GM12878 (cell line): ENCODE measurements at regions of chr11 and their contacts with region 1.

Region 1: GRCh38 chr11:1852877-1853276 is at the start of gene LSP1:
- DNase-seq: peak; percentile 92
- ATAC-seq: peak; percentile 57
- H3K4me3 ChIP-seq: peak within 1 kb of the TSS; percentile 96
- H3K27ac ChIP-seq: peak within 1 kb of the TSS; percentile 99
- H3K4me1 ChIP-seq: peaks cover 60% of the 10 kb centered on the region
- H3K27me3 ChIP-seq: no peaks in the 10 kb centered on the region
- CTCF ChIP-seq: no peak
- EP300 ChIP-seq: peak; percentile 97 to 98
- POLR2A ChIP-seq: peak; percentile 89
- RAD21 ChIP-seq: peak; percentile 43; the same call in 1 of the 2 replicates
- polyA plus RNA-seq, gene LSP1: 19.2 to 34.2 TPM

Region 2: GRCh38 chr11:1837171-1838076 is 15.5 kb before region 1 on chr11:
- CTCF ChIA-PET with region 1: interaction called, 5 read pairs
- POLR2A ChIA-PET with region 1: interaction called, 4 read pairs
- RAD21 ChIA-PET with region 1: interaction called, 10 read pairs
- SMC1A ChIA-PET with region 1: interaction called, 6 read pairs
- in situ Hi-C with region 1: no loop called
- intact Hi-C with region 1: no loop called
- DNase-seq: no peak
- ATAC-seq: peak; percentile 89
- H3K4me3 ChIP-seq: no peak overlapping the region; the same call in 1 of the 2 replicates
- H3K27ac ChIP-seq: no peak overlapping the region
- H3K4me1 ChIP-seq: peaks cover 15% of the 10 kb centered on the region
- H3K27me3 ChIP-seq: no peaks in the 10 kb centered on the region; a peak in 1 of 4 replicates
- CTCF ChIP-seq: peak; percentile 91 to 96 (median 94)
- EP300 ChIP-seq: no peak
- POLR2A ChIP-seq: no peak
- RAD21 ChIP-seq: peak; percentile 96

Region 3: DNA sequence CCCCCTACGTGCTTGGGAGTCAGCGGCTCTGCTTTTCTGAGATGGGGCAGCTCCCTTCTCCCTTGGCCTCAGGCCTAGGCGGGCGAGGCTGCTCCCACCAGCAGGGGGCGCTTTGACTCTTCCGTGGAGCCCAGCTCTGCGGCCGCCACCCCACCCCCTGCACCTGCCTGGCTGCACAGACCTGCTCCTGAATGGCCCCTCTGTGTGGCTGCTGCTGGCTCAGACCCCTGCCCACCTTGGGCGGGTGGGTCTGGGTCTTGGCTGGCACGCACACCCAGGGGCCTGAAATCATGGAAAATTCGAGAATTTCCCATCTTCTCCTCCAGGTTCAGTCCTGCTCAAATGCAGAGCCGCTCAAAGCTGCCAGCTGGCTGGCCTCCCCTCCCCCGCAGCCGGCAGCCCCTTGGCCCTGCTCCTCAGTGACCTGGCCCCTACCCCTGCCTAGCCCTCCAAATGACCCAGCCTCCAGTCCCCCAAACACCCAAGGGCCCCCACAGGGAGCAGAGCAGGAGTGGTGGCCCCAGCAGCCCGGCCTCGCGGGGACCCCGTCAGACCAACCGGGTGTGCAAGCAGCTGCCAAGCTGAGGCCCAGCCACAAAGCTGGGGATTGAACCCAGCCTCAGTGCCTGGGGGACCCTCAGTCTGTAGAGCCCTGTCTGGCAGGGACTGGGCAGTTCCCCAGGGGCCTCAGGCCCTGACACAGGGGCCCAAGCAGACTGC is 29.8 kb after region 1 on chr11:
- CTCF ChIA-PET with region 1: interaction called, 23 read pairs
- POLR2A ChIA-PET with region 1: interaction called, 3 read pairs
- RAD21 ChIA-PET with region 1: interaction called, 10 read pairs
- SMC1A ChIA-PET with region 1: interaction called, 7 read pairs
- in situ Hi-C with region 1: no loop called
- intact Hi-C with region 1: no loop called
- DNase-seq: no peak
- ATAC-seq: peak; percentile 96
- H3K4me3 ChIP-seq: no peak overlapping the region
- H3K27ac ChIP-seq: no peak overlapping the region
- H3K4me1 ChIP-seq: no peaks in the 10 kb centered on the region; the same call in 1 of the 2 replicates
- H3K27me3 ChIP-seq: no peaks in the 10 kb centered on the region
- CTCF ChIP-seq: peak; percentile 84 to 93 (median 92)
- EP300 ChIP-seq: no peak
- POLR2A ChIP-seq: peak; percentile 45; the same call in 1 of the 2 replicates
- RAD21 ChIP-seq: peak; percentile 68

Region 4: DNA sequence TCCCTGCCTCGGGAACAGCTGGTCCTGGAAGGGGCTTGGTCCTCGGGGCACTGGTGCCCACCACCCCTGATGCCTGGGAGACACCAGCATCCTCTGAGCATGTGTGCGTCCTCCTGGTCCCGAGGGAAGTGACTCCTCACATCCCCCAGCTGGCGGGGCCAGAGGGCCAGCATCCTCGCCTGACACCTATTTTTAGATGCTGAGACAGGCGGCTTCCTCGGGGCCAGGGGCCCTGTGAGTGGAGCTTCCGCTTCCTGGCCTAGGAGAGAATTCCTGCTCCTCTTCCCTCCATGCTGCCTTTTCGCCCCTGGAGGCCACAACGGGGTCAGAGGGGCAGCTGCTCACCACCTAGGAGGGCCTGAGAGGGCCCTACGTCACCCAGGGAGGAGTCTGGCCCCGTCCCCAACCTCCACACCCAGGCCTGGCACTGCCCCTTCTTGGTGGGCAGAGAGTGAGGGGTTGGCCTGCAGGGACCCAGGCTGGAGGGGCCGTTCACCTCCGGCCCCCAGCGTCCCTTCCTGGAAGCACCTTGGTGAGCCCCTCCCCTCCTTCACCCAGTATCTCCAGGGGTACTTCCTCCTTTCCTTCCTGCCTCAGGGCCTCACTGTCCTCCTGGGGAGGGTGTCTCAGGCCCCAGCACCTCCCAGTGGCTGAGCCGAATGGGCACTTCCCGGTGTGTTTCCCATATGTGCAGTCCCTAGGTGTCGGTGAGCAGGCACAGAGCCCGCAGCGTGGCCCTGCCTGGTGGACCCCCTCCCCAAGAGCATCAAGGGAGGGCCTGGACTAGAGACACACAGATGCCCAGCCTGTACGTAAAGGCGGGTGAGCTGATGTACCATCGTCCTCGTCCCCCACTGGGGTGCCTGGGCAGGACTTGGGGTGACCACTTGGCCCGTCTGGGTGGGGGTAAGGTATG is 530.3 kb after region 1 on chr11:
- CTCF ChIA-PET with region 1: no interaction called
- POLR2A ChIA-PET with region 1: no interaction called
- RAD21 ChIA-PET with region 1: no interaction called
- SMC1A ChIA-PET with region 1: no interaction called
- in situ Hi-C with region 1: loop called (anchors 5 kb)
- intact Hi-C with region 1: loop called (anchors 5 kb)
- DNase-seq: no peak
- ATAC-seq: peak; percentile 13
- H3K4me3 ChIP-seq: peak overlapping the region; percentile 45; the same call in 1 of the 2 replicates
- H3K27ac ChIP-seq: peak overlapping the region; percentile 62
- H3K4me1 ChIP-seq: peaks cover 80% of the 10 kb centered on the region
- H3K27me3 ChIP-seq: no peaks in the 10 kb centered on the region
- CTCF ChIP-seq: 0 out of 6 replicates have a peak, but pooled peaks of 1 of the 3 experiments have one; percentile 7
- EP300 ChIP-seq: no peak
- POLR2A ChIP-seq: no peak; the same call in 1 of the 2 replicates
- RAD21 ChIP-seq: no peak

Region 5: DNA sequence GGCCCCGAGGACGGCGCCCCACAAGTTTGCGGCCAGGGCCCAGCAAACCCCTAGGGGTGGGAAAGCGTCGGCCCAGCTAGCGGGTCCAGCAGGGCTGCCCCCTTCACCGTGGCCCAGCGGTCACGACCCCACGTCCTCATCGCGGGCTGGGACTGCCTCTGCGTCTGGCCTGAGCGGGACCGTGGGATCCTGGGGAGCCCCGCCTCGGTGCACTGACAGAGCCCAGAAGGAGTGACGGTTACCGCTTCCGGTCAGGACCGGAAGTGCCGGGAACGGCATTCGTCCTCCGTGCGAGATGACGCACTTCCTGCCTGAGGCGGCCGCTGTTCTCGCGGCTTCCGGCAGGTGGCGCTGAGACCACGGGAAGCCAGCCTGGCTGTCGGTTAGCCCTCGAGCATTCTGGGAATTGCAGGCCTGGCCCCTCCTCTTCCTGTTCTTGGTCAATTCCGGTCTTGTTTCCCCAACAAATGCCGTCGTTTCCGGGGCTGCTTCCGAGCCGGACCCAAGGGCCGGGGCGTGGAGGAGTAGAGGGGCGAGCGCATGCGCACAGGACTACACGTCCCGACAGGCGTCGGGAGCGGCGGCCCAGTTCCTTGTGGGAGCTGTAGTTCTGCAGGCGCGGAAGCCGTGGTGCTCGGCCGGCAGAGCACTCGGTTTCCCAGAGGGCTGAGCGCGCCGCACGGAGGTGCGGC is 547.3 kb after region 1 on chr11 and contains the start of gene TSSC4:
- CTCF ChIA-PET with region 1: no interaction called
- POLR2A ChIA-PET with region 1: no interaction called
- RAD21 ChIA-PET with region 1: no interaction called
- SMC1A ChIA-PET with region 1: no interaction called
- in situ Hi-C with region 1: no loop called
- intact Hi-C with region 1: loop called (anchors 5 kb)
- DNase-seq: peak; percentile 99
- ATAC-seq: peak; percentile 94
- H3K4me3 ChIP-seq: peak within 1 kb of the TSS; percentile 92
- H3K27ac ChIP-seq: peak within 1 kb of the TSS; percentile 89
- H3K4me1 ChIP-seq: peaks cover 10% of the 10 kb centered on the region
- H3K27me3 ChIP-seq: no peaks in the 10 kb centered on the region
- CTCF ChIP-seq: peak; percentile 99 to 100 (median 100); a peak in 5 of 6 replicates
- EP300 ChIP-seq: peak; percentile 39 to 64; a peak in 3 of 4 replicates
- POLR2A ChIP-seq: peak; percentile 93
- RAD21 ChIP-seq: peak; percentile 51
- polyA plus RNA-seq, gene TSSC4: 0.69 to 5.3 TPM